ENCODE measurements at regions of chr19 and their contacts with region 1.

Region 1: DNA sequence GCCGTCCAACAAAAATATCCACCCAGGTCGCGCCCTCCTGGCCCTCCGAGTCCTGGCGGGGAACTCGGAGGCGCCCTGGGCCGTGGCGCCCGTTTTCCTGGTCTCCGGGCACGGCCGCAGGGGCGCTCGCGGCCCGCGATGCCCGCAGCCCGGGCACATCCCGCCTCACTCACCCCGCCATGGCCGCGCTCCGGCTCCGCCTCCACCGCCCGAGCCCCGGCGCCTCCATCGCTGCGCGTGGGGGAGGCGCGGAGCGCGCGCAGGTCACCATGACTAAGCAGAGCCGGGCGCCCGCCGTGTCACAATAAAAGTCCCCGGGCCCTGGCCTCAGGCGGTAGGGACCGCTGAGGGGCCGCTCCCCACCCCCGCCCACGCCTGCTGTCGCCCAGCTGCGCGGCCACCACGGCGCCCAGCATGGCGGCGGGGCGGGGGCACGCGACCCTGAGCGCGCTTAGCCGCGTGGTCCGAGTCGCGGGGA is 593 bp downstream of the KEAP1 start:
- DNase-seq: peak; percentile 92
- H3K4me3 Mint-ChIP-seq: peak overlapping the region; percentile 94
- H3K27ac Mint-ChIP-seq: peak overlapping the region; percentile 88
- H3K4me1 Mint-ChIP-seq: peaks cover 31% of the 10 kb centered on the region
- H3K27me3 Mint-ChIP-seq: no peaks in the 10 kb centered on the region

Region 2: GRCh38 chr19:9971166-9971897 is 531.2 kb before region 1 on chr19:
- intact Hi-C with region 1: no loop called
- DNase-seq: no peak
- H3K4me3 Mint-ChIP-seq: no peak overlapping the region
- H3K27ac Mint-ChIP-seq: no peak overlapping the region
- H3K4me1 Mint-ChIP-seq: no peaks in the 10 kb centered on the region
- H3K27me3 Mint-ChIP-seq: peaks cover 8% of the 10 kb centered on the region

Region 3: GRCh38 chr19:10085641-10086590 is 416.6 kb before region 1 on chr19 and contains the start of gene SHFL:
- intact Hi-C with region 1: no loop called
- DNase-seq: peak; percentile 88
- H3K4me3 Mint-ChIP-seq: peak within 1 kb of the TSS; percentile 90
- H3K27ac Mint-ChIP-seq: peak within 1 kb of the TSS; percentile 88
- H3K4me1 Mint-ChIP-seq: peaks cover 7% of the 10 kb centered on the region
- H3K27me3 Mint-ChIP-seq: peaks cover 2% of the 10 kb centered on the region
- total RNA-seq, gene SHFL: 64.1 and 70.5 TPM in 2 replicates

Region 4: DNA sequence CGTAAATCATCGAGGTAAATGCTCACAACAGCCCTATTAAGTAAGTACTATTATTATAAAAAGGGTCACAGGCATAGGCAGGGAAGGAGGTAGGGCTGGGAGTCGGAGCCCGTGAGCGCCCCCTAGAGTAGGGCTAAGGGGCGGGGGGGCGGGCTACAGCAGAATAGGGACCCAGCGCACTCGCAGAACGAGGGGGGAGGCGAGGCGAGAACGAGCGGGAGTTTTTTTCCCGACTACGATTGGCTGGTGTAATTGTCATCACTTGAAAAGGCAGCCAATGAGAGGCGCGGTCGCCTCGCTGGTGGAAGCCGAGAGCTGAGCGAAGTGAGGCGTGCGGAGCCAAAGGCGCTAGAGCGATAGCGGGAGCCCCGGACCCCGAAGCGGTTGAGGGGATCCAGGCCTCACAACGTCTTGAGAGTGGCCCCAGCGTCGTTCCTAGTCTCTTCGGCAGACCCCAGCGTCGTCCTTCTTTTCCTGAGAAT is 23.6 kb before region 1 on chr19:
- intact Hi-C with region 1: loop called (anchors 1 kb)
- DNase-seq: peak; percentile 86
- H3K4me3 Mint-ChIP-seq: peak overlapping the region; percentile 68
- H3K27ac Mint-ChIP-seq: peak overlapping the region; percentile 76
- H3K4me1 Mint-ChIP-seq: peaks cover 16% of the 10 kb centered on the region
- H3K27me3 Mint-ChIP-seq: no peaks in the 10 kb centered on the region

Region 5: GRCh38 chr19:10543420-10544241 is 41.1 kb after region 1 on chr19 and contains the start of gene ATG4D:
- intact Hi-C with region 1: loop called (anchors 5 kb)
- DNase-seq: peak; percentile 71
- H3K4me3 Mint-ChIP-seq: peak within 1 kb of the TSS; percentile 85
- H3K27ac Mint-ChIP-seq: peak within 1 kb of the TSS; percentile 82
- H3K4me1 Mint-ChIP-seq: peaks cover 7% of the 10 kb centered on the region
- H3K27me3 Mint-ChIP-seq: peaks cover 25% of the 10 kb centered on the region
- total RNA-seq, gene ATG4D: 37.3 and 40.7 TPM in 2 replicates

Region 6: DNA sequence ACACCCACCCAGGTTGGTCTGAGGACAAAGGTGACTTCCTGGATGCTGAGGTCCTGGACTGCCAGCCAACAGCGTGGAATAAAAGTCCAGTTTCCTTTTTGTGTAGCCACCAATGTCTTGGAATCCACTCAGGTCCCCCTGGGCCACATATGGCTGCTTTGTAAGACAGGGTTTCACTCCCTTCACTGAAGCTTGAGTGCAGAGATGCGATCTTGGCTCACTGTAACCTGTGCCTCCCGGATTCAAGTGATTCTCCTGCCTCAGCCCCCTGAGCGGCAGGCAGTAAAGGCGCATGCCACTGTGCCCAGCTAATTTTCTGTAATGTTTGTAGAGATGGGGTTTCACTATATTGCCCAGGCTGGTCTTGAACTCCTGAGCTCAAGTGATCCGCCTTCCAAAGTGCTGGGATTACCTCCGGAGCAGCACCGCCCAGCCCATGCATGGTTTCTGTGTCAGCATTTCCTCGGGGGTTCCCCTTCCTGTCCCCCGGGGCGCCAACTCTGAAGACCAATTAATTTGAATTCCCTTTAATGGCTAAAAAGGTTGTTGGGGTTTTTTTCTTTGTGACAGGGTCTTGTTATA is 677.2 kb after region 1 on chr19:
- intact Hi-C with region 1: no loop called
- DNase-seq: no peak
- H3K4me3 Mint-ChIP-seq: no peak overlapping the region
- H3K27ac Mint-ChIP-seq: no peak overlapping the region
- H3K4me1 Mint-ChIP-seq: no peaks in the 10 kb centered on the region
- H3K27me3 Mint-ChIP-seq: peaks cover 3% of the 10 kb centered on the region

Measured in activated T-helper 1 cell treated with anti-CD3 and anti-CD28 coated beads, Interleukin-12 subunit alpha, Interleukin-12 subunit beta, Interleukin-2, Interleukin-4 antibody, amounts not matched to agents 30 ng/mL and 10 ng/mL and 1 ng/mL, durations not matched to agents 14 hours and 24 hours and 36 hours (primary cell).